Dendritic cell treated with granulocyte-macrophage colony-stimulating factor and Interleukin-4, amounts not matched to agents 40 ng/mL and 50 ng/mL, for 4 days (primary cell): ENCODE measurements at regions of chr16 and their contacts with region 1.

Region 1: DNA sequence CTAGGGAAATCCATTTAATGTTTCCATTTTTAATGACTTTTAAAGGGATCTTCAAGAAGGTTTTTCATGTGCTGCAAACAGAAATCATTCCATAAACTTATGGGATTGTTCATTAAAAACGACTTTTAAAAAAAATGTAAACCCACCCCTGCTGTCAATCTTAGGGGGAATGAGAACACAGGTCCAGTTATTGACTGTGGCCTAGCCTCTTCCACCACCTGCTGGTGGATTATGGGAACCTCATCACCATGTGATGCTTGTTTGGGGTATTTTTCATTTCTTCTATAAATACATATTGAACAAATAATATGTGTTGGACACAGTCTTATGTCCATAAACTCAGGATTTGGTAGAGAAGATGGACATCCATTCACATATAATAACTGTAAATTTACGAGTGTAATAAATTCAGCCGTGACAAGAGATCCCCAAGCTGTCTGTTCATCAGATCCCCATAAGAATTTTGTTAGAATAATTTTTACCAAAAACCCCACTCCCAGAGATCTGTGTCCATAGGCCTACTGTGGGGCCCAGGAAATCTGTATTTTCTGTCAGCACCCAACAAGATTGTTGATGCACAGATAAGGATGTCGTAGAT is 42.0 kb upstream of the TMC5 start:
- H3K4me3 Mint-ChIP-seq: no peak overlapping the region
- H3K27ac Mint-ChIP-seq: no peak overlapping the region
- H3K4me1 Mint-ChIP-seq: no peaks in the 10 kb centered on the region
- H3K27me3 Mint-ChIP-seq: peaks cover 16% of the 10 kb centered on the region

Region 2: GRCh38 chr16:19029980-19030379 is 345.7 kb before region 1 on chr16:
- intact Hi-C with region 1: no loop called
- H3K4me3 Mint-ChIP-seq: no peak overlapping the region
- H3K27ac Mint-ChIP-seq: no peak overlapping the region
- H3K4me1 Mint-ChIP-seq: no peaks in the 10 kb centered on the region
- H3K27me3 Mint-ChIP-seq: no peaks in the 10 kb centered on the region

Region 3: GRCh38 chr16:19179546-19180490 is 195.8 kb before region 1 on chr16:
- intact Hi-C with region 1: loop called (anchors 5 kb)
- H3K4me3 Mint-ChIP-seq: peak overlapping the region; percentile 52
- H3K27ac Mint-ChIP-seq: peak overlapping the region; percentile 86
- H3K4me1 Mint-ChIP-seq: peaks cover 65% of the 10 kb centered on the region
- H3K27me3 Mint-ChIP-seq: no peaks in the 10 kb centered on the region

Region 4: GRCh38 chr16:19223235-19224170 is 152.2 kb before region 1 on chr16:
- intact Hi-C with region 1: loop called (anchors 1 kb)
- H3K4me3 Mint-ChIP-seq: no peak overlapping the region
- H3K27ac Mint-ChIP-seq: no peak overlapping the region
- H3K4me1 Mint-ChIP-seq: peaks cover 43% of the 10 kb centered on the region
- H3K27me3 Mint-ChIP-seq: peaks cover 4% of the 10 kb centered on the region

Region 5: GRCh38 chr16:19645557-19645981 is 269.9 kb after region 1 on chr16:
- intact Hi-C with region 1: no loop called
- H3K4me3 Mint-ChIP-seq: no peak overlapping the region
- H3K27ac Mint-ChIP-seq: no peak overlapping the region
- H3K4me1 Mint-ChIP-seq: no peaks in the 10 kb centered on the region
- H3K27me3 Mint-ChIP-seq: no peaks in the 10 kb centered on the region